H1 (cell line): ENCODE measurements at regions of chr17 and their contacts with region 1.

Region 1: GRCh38 chr17:45648642-45649041 is 135.5 kb upstream of the CRHR1 start:
- DNase-seq: peak in 1 of 2 experiments; percentile 88
- H3K4me3 ChIP-seq: no peak overlapping the region
- H3K27ac ChIP-seq: no peak overlapping the region
- H3K4me1 ChIP-seq: peaks cover 0 to 5% (median under 1%) of the 10 kb centered on the region in 4 experiments; a peak in 3 of 7 replicates
- H3K27me3 ChIP-seq: no peaks in the 10 kb centered on the region
- CTCF ChIP-seq: peak; percentile 82 to 92 (median 91)
- EP300 ChIP-seq: no peak
- POLR2A ChIP-seq: no peak
- RAD21 ChIP-seq: peak; percentile 60 to 75

Region 2: DNA sequence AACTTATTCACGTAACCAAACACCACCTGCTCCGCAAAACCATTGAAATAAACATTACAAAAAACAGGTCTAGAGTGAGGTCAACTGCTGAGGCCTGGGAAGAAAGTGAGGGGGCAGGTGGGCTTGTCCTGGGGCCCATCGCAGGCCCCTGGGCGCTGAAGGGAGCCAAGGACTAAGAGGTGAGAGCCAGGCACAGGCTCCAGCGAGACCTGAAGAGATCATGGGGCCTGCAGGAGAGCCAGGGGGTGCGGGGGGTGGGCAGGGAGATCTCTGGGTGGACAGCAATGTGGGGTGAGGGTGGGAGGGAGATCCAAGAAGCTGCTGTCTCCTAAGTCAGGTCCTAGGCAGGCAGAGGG is 223.9 kb before region 1 on chr17:
- CTCF ChIA-PET with region 1: no interaction called
- POLR2A ChIA-PET with region 1: no interaction called
- DNase-seq: no peak
- H3K4me3 ChIP-seq: peak overlapping the region in 2 of 4 experiments; percentile 34 to 55; a peak in 4 of 8 replicates
- H3K27ac ChIP-seq: no peak overlapping the region
- H3K4me1 ChIP-seq: peaks cover 2 to 22% (median 15%) of the 10 kb centered on the region in 4 experiments
- H3K27me3 ChIP-seq: peaks cover 9 to 21% (median 17%) of the 10 kb centered on the region in 4 experiments
- CTCF ChIP-seq: no peak
- EP300 ChIP-seq: no peak
- POLR2A ChIP-seq: no peak
- RAD21 ChIP-seq: no peak

Region 3: GRCh38 chr17:45573924-45574770 is 74.5 kb before region 1 on chr17:
- CTCF ChIA-PET with region 1: no interaction called
- POLR2A ChIA-PET with region 1: no interaction called
- DNase-seq: no peak
- H3K4me3 ChIP-seq: no peak overlapping the region
- H3K27ac ChIP-seq: no peak overlapping the region
- H3K4me1 ChIP-seq: peaks cover 0 to 3% (median 0%) of the 10 kb centered on the region in 4 experiments; a peak in 2 of 7 replicates
- H3K27me3 ChIP-seq: no peaks in the 10 kb centered on the region
- CTCF ChIP-seq: no peak
- EP300 ChIP-seq: no peak
- POLR2A ChIP-seq: no peak
- RAD21 ChIP-seq: no peak

Region 4: GRCh38 chr17:45660474-45660873 is 11.8 kb after region 1 on chr17:
- CTCF ChIA-PET with region 1: interaction called, 41 read pairs
- POLR2A ChIA-PET with region 1: interaction called, 3 read pairs
- DNase-seq: no peak
- H3K4me3 ChIP-seq: no peak overlapping the region
- H3K27ac ChIP-seq: no peak overlapping the region
- H3K4me1 ChIP-seq: no peaks in the 10 kb centered on the region
- H3K27me3 ChIP-seq: peaks cover 0 to 2% (median 0%) of the 10 kb centered on the region in 4 experiments; a peak in 2 of 7 replicates
- CTCF ChIP-seq: no peak
- EP300 ChIP-seq: no peak
- POLR2A ChIP-seq: no peak
- RAD21 ChIP-seq: no peak

Region 5: DNA sequence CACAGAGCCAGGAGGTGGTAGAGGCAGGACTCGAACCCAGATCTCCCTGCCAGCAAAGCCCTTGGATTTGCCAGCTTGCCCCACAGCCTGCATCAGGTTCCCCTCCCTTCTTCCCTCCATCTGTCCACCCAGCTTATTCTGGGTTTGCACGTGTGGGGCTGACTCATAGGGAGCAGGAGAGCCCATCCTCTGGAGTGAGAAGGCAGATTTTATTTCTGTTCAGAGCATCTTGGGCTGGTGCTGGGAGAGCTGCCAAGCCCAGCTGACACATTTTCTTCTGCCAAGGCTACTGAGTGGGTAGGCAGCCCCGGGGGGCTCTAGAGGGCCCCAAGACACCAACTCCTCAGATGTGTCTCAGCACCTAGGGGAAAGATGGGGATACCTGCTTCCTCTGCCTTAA is 29.1 kb after region 1 on chr17:
- CTCF ChIA-PET with region 1: interaction called, 13 read pairs
- POLR2A ChIA-PET with region 1: no interaction called
- DNase-seq: no peak
- H3K4me3 ChIP-seq: no peak overlapping the region
- H3K27ac ChIP-seq: no peak overlapping the region
- H3K4me1 ChIP-seq: peaks cover 0 to 7% (median 2%) of the 10 kb centered on the region in 4 experiments; a peak in 2 of 7 replicates
- H3K27me3 ChIP-seq: no peaks in the 10 kb centered on the region
- CTCF ChIP-seq: no peak
- EP300 ChIP-seq: no peak
- POLR2A ChIP-seq: no peak
- RAD21 ChIP-seq: no peak

Region 6: GRCh38 chr17:45696442-45696841 is 47.8 kb after region 1 on chr17:
- CTCF ChIA-PET with region 1: interaction called, 17 read pairs
- POLR2A ChIA-PET with region 1: no interaction called
- DNase-seq: no peak
- H3K4me3 ChIP-seq: no peak overlapping the region
- H3K27ac ChIP-seq: no peak overlapping the region
- H3K4me1 ChIP-seq: no peaks in the 10 kb centered on the region
- H3K27me3 ChIP-seq: no peaks in the 10 kb centered on the region; a peak in 1 of 7 replicates
- CTCF ChIP-seq: no peak
- EP300 ChIP-seq: no peak
- POLR2A ChIP-seq: no peak
- RAD21 ChIP-seq: no peak

Region 7: GRCh38 chr17:45729294-45729907 is 80.8 kb after region 1 on chr17:
- CTCF ChIA-PET with region 1: interaction called, 10 read pairs
- POLR2A ChIA-PET with region 1: no interaction called
- DNase-seq: no peak
- H3K4me3 ChIP-seq: no peak overlapping the region
- H3K27ac ChIP-seq: no peak overlapping the region
- H3K4me1 ChIP-seq: no peaks in the 10 kb centered on the region
- H3K27me3 ChIP-seq: peaks cover 0 to 5% (median under 1%) of the 10 kb centered on the region in 4 experiments; a peak in 3 of 7 replicates
- CTCF ChIP-seq: no peak
- EP300 ChIP-seq: no peak
- POLR2A ChIP-seq: no peak
- RAD21 ChIP-seq: no peak

Region 8: GRCh38 chr17:45812102-45812501 is 163.5 kb after region 1 on chr17:
- CTCF ChIA-PET with region 1: interaction called, 13 read pairs
- POLR2A ChIA-PET with region 1: interaction called, 3 read pairs
- DNase-seq: no peak
- H3K4me3 ChIP-seq: no peak overlapping the region
- H3K27ac ChIP-seq: no peak overlapping the region
- H3K4me1 ChIP-seq: peaks cover 0 to 3% (median 0%) of the 10 kb centered on the region in 4 experiments; a peak in 1 of 7 replicates
- H3K27me3 ChIP-seq: no peaks in the 10 kb centered on the region
- CTCF ChIP-seq: peak; percentile 34 to 48 (median 47); a peak in 3 of 4 replicates
- EP300 ChIP-seq: no peak
- POLR2A ChIP-seq: no peak
- RAD21 ChIP-seq: peak; percentile 25 to 45; a peak in 3 of 4 replicates

Region 9: GRCh38 chr17:45828628-45829027 is 180.0 kb after region 1 on chr17:
- CTCF ChIA-PET with region 1: interaction called, 45 read pairs
- POLR2A ChIA-PET with region 1: no interaction called
- DNase-seq: no peak
- H3K4me3 ChIP-seq: no peak overlapping the region
- H3K27ac ChIP-seq: no peak overlapping the region
- H3K4me1 ChIP-seq: peaks cover 0 to 2% (median 0%) of the 10 kb centered on the region in 4 experiments; a peak in 1 of 7 replicates
- H3K27me3 ChIP-seq: no peaks in the 10 kb centered on the region; a peak in 1 of 7 replicates
- CTCF ChIP-seq: no peak
- EP300 ChIP-seq: no peak
- POLR2A ChIP-seq: no peak
- RAD21 ChIP-seq: peak in 1 of 2 experiments; percentile 22; a peak in 1 of 4 replicates